CD8-positive, alpha-beta T cell (primary cell): ENCODE measurements at regions of chr1 and their contacts with region 1.

Region 1: GRCh38 chr1:108936170-108936569 is 27.1 kb downstream of the CLCC1 start:
- DNase-seq: no peak
- ATAC-seq: no peak
- H3K4me3 ChIP-seq: no peak overlapping the region
- H3K4me3 Mint-ChIP-seq: no peak overlapping the region
- H3K27ac ChIP-seq: no peak overlapping the region
- H3K27ac Mint-ChIP-seq: no peak overlapping the region
- H3K4me1 ChIP-seq: no peaks in the 10 kb centered on the region
- H3K4me1 Mint-ChIP-seq: no peaks in the 10 kb centered on the region
- H3K27me3 ChIP-seq: no peaks in the 10 kb centered on the region
- H3K27me3 Mint-ChIP-seq: no peaks in the 10 kb centered on the region
- CTCF ChIP-seq: no peak

Region 2: GRCh38 chr1:107782217-107782845 is 1153.8 kb before region 1 on chr1:
- CTCF ChIA-PET with region 1: no interaction called
- POLR2A ChIA-PET with region 1: no interaction called
- intact Hi-C with region 1: no loop called
- DNase-seq: peak in 5 of 9 experiments; percentile 25 to 82 (median 64)
- ATAC-seq: no peak
- H3K4me3 ChIP-seq: no peak overlapping the region
- H3K4me3 Mint-ChIP-seq: no peak overlapping the region
- H3K27ac ChIP-seq: no peak overlapping the region
- H3K27ac Mint-ChIP-seq: no peak overlapping the region
- H3K4me1 ChIP-seq: peaks cover 29% of the 10 kb centered on the region
- H3K4me1 Mint-ChIP-seq: peaks cover 36% of the 10 kb centered on the region
- H3K27me3 ChIP-seq: no peaks in the 10 kb centered on the region
- H3K27me3 Mint-ChIP-seq: no peaks in the 10 kb centered on the region
- CTCF ChIP-seq: peak; percentile 91

Region 3: DNA sequence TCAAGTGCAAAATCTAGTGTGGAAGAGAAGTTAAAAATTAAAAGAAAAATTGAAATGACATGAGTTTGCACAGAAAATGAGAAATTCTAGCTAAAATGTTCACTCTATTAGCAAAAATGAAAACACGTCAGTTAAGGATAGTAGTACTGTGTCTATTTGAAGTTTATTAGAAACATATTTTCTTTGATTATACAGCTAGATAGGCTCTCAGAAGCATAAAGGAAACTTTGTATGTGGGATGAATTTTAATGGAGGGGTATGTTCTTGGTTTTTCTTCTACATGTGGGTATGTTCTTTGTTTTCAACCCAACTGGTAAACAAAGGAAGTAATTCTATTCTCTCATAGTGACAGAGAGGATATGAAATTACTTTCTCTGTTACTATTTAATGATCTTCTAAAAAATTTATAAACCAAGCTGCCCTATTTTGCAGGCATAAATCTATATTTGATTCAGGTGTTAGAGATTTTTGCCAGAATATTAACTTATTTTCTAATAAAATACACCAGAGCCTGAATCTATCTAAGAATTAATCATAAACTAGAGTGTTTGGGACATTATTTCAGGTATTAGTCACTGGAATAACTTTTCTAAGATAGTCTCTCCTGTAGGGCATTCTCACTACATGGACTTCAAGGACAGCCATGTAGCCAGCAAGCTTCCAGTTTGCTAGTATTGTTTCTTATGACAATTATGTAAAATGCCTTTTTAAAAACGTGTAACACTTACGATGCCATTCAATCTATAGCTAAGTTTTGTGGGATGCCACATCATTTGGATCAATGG is 43.6 kb before region 1 on chr1:
- CTCF ChIA-PET with region 1: no interaction called
- POLR2A ChIA-PET with region 1: no interaction called
- intact Hi-C with region 1: no loop called
- DNase-seq: no peak
- ATAC-seq: no peak
- H3K4me3 ChIP-seq: no peak overlapping the region
- H3K4me3 Mint-ChIP-seq: no peak overlapping the region
- H3K27ac ChIP-seq: no peak overlapping the region
- H3K27ac Mint-ChIP-seq: no peak overlapping the region
- H3K4me1 ChIP-seq: no peaks in the 10 kb centered on the region
- H3K4me1 Mint-ChIP-seq: no peaks in the 10 kb centered on the region
- H3K27me3 ChIP-seq: no peaks in the 10 kb centered on the region
- H3K27me3 Mint-ChIP-seq: peaks cover 12% of the 10 kb centered on the region
- CTCF ChIP-seq: no peak

Region 4: GRCh38 chr1:108976658-108977057 is 40.5 kb after region 1 on chr1:
- CTCF ChIA-PET with region 1: no interaction called
- POLR2A ChIA-PET with region 1: no interaction called
- intact Hi-C with region 1: loop called in 1 of 2 experiments (anchors 5 kb)
- DNase-seq: no peak
- ATAC-seq: no peak
- H3K4me3 ChIP-seq: no peak overlapping the region
- H3K4me3 Mint-ChIP-seq: no peak overlapping the region
- H3K27ac ChIP-seq: no peak overlapping the region
- H3K27ac Mint-ChIP-seq: no peak overlapping the region
- H3K4me1 ChIP-seq: no peaks in the 10 kb centered on the region
- H3K4me1 Mint-ChIP-seq: no peaks in the 10 kb centered on the region
- H3K27me3 ChIP-seq: no peaks in the 10 kb centered on the region
- H3K27me3 Mint-ChIP-seq: no peaks in the 10 kb centered on the region
- CTCF ChIP-seq: no peak

Region 5: GRCh38 chr1:109370712-109371455 is 434.7 kb after region 1 on chr1:
- CTCF ChIA-PET with region 1: no interaction called
- POLR2A ChIA-PET with region 1: no interaction called
- intact Hi-C with region 1: no loop called
- DNase-seq: peak in 1 of 9 experiments; percentile 5
- ATAC-seq: no peak
- H3K4me3 ChIP-seq: no peak overlapping the region
- H3K4me3 Mint-ChIP-seq: no peak overlapping the region
- H3K27ac ChIP-seq: no peak overlapping the region
- H3K27ac Mint-ChIP-seq: no peak overlapping the region
- H3K4me1 ChIP-seq: no peaks in the 10 kb centered on the region
- H3K4me1 Mint-ChIP-seq: peaks cover 13% of the 10 kb centered on the region
- H3K27me3 ChIP-seq: peaks cover 0 to 5% of the 10 kb centered on the region in 2 experiments
- H3K27me3 Mint-ChIP-seq: peaks cover 9% of the 10 kb centered on the region
- CTCF ChIP-seq: no peak